ENCODE measurements at regions of chr15 and their contacts with region 1.

Region 1: GRCh38 chr15:88491158-88491557 is 23.6 kb downstream of the MRPS11 start:
- DNase-seq: no peak
- ATAC-seq: no peak
- H3K4me3 ChIP-seq: no peak overlapping the region
- H3K27ac ChIP-seq: no peak overlapping the region
- H3K4me1 ChIP-seq: no peaks in the 10 kb centered on the region
- H3K27me3 ChIP-seq: no peaks in the 10 kb centered on the region
- CTCF ChIP-seq: no peak
- POLR2A ChIP-seq: no peak

Region 2: DNA sequence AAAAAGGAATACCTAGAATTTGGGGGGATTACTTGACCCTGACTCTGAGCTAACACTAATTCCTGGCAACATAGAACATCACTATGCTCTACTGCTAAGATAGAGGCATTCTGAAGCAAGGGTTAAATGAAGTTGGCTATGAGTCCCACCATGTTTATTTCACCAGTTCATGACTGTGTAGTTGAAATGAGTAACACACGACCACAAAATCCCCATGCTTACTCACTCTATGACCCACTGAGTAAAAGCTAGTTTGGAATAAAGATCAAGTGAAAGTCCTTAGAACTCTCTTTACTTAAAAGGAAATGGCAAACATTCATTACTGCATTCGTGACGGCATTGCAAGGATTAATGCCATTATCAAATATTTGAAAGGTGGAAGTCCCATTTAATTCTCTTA is 71.3 kb before region 1 on chr15:
- in situ Hi-C with region 1: loop called in 1 of 4 experiments (anchors 10 kb)
- intact Hi-C with region 1: no loop called
- DNase-seq: no peak
- ATAC-seq: no peak
- H3K4me3 ChIP-seq: no peak overlapping the region
- H3K27ac ChIP-seq: no peak overlapping the region
- H3K4me1 ChIP-seq: no peaks in the 10 kb centered on the region
- H3K27me3 ChIP-seq: peaks cover 0 to 2% (median 0%) of the 10 kb centered on the region in 3 donors
- CTCF ChIP-seq: no peak
- POLR2A ChIP-seq: no peak

Region 3: DNA sequence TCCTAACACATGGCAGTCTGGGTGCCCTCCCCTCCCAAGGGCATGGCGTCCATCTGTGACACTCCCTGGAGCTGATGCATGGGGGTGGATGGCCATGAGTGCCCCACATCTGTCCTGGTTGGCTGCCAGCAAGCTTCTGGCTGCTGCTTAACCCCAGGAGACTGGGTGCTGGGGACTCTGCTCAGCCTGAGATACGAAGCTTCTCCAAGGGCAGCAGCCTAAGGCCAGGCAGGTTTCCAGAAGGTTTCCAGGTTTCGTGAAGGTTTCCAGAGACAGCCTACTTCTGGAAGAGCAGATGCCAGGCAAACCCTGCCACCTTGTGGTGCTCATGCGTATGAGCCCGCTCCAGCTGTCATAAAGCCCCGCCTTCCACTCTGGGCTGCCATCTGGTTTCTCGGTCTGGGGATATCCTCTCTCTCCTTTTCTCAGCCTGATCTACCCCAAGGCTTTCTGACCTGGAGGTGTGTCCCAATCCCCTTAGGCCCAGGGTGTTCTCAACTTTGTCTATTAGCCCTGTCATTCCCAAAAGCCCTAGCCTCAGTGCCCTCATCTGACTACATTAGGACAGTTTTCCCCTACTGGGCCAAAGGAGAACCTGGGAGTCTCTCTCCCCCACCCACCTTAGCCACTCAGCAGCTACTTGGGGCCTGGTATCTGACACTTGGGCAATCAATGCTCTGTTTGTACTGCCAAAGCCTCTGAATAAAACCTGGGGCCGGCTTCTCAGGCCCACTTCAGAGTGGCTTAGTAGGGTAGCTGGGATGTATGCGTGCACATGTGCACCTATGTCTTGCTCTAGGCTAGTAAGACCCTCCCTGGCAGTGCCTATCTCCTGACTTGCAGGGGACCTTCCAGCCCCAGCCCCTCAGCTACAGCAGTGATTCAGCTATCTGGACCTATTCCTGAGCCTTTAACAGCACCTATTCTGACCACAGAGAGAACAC is 36.0 kb before region 1 on chr15:
- in situ Hi-C with region 1: no loop called
- intact Hi-C with region 1: no loop called
- DNase-seq: peak; percentile 4 to 47
- ATAC-seq: peak; percentile 42 to 88
- H3K4me3 ChIP-seq: no peak overlapping the region
- H3K27ac ChIP-seq: no peak overlapping the region
- H3K4me1 ChIP-seq: peaks cover 7 to 8% of the 10 kb centered on the region in 2 donors
- H3K27me3 ChIP-seq: no peaks in the 10 kb centered on the region
- CTCF ChIP-seq: peak; percentile 27 to 58 (median 53)
- POLR2A ChIP-seq: no peak